A549 (cell line): ENCODE measurements at regions of chr4 and their contacts with region 1.

Region 1: DNA sequence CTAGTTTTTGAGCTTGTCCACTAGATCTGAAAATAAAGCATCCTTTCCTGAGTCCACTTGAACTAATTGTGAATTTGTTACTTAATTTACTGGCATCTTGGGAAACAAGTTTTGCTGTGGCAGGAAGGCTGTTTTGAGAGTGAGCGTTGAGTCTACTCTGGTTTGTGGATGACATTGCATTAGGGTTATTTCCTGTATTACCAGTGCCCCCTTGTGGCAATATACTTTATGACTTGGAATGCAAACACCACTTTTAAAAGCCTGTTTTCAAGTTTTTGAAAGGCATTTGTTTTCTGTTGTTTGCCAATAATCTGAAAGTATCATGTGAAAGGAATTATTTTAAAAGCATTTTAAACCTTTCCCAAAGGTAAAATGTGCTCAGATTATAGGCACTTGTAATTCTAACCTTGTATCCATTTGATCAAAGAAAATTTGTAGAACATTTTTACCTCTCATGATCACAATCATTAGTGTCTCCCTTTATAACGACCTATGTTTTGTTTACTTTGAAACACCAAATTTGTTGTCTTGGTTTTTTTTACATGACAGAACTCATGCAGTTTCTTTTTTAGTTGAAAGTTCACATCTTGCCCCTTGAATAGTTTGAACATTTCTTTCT is 18.0 kb upstream of the CYP2U1 start:
- DNase-seq: peak; percentile 12 to 62
- ATAC-seq: peak; percentile 68 to 80; a peak in 2 of 6 replicates
- H3K4me3 ChIP-seq: no peak overlapping the region
- H3K27ac ChIP-seq: no peak overlapping the region
- H3K4me1 ChIP-seq: no peaks in the 10 kb centered on the region
- CTCF ChIP-seq: peak; percentile 76
- EP300 ChIP-seq: no peak
- POLR2A ChIP-seq: no peak
- RAD21 ChIP-seq: peak; percentile 90 to 91

Region 2: DNA sequence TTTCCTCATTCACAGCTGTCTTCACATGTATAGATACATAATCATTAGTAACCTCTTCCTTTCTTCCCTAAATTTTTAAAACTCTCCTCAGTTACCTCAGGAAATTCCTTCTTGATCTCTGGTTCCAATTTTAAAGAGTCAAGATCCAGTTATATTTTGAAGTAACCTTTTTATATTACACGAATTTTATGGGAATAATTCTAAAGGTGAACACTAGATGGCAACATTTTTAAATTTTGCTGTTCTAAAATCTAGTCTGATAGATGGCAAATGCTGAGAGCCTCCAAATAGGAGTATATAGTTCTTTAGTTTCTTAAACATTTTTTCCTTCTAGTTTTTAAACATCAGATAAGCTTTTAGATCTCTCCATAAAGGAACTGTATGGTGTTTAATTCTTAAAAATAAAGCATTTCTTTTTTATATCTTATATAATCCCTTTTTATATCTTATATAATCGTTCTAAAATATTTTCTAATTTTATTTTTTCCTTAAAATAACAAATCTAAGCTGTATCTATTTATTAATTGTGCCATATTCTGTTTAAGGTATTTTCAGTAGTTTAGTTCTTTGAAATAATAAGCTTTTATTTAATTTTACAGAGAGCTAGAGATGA is 155.4 kb before region 1 on chr4:
- CTCF ChIA-PET with region 1: interaction called, 36 read pairs
- POLR2A ChIA-PET with region 1: no interaction called
- DNase-seq: peak; percentile 11 to 17
- ATAC-seq: no peak
- H3K4me3 ChIP-seq: no peak overlapping the region
- H3K27ac ChIP-seq: no peak overlapping the region
- H3K4me1 ChIP-seq: no peaks in the 10 kb centered on the region
- CTCF ChIP-seq: peak; percentile 52
- EP300 ChIP-seq: no peak
- POLR2A ChIP-seq: no peak
- RAD21 ChIP-seq: peak; percentile 43 to 60

Region 3: DNA sequence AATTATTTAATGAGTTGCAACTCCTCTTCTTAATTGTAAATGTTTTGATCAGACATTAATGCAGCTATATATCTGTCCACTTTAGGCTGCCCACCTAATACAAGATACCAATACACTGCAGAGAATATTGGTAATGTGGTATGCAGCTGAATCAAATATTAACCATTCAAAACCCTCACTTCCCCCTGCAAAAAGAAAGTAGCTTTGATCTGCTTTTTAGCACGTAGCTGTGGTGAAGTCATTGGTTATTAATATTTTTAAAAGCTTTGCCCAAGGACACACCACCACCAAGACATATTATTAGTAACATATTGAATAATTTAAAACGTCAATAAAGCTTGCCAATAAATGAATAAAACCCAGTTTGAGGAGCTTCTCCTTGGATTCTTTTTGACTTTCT is 10.7 kb before region 1 on chr4:
- CTCF ChIA-PET with region 1: interaction called, 13 read pairs
- POLR2A ChIA-PET with region 1: no interaction called
- DNase-seq: no peak
- ATAC-seq: no peak
- H3K4me3 ChIP-seq: no peak overlapping the region
- H3K27ac ChIP-seq: no peak overlapping the region
- H3K4me1 ChIP-seq: no peaks in the 10 kb centered on the region
- CTCF ChIP-seq: no peak
- EP300 ChIP-seq: no peak
- POLR2A ChIP-seq: no peak
- RAD21 ChIP-seq: no peak

Region 4: GRCh38 chr4:108045694-108046038 is 132.3 kb after region 1 on chr4:
- CTCF ChIA-PET with region 1: no interaction called
- POLR2A ChIA-PET with region 1: no interaction called
- DNase-seq: no peak
- ATAC-seq: no peak
- H3K4me3 ChIP-seq: no peak overlapping the region
- H3K27ac ChIP-seq: no peak overlapping the region
- H3K4me1 ChIP-seq: no peaks in the 10 kb centered on the region
- CTCF ChIP-seq: no peak
- EP300 ChIP-seq: no peak
- POLR2A ChIP-seq: no peak
- RAD21 ChIP-seq: no peak

Region 5: DNA sequence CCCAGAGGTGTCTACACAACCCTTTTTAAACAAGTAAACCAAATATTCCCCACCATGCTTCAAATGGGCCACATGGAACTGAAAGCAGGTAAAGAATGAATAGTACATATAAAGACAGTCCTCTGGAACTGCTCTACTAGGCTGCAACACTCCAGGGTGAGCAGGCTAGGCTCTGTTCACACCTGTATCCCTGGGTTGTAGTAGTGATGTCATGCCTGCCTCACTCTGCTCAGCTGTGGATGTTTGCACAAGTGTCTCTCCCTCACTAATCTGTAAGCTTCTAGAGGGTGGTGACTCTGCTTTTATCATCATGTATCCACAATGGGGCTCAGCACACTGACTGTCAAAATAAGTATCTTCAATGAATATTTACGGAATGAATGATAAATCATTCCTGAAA is 234.9 kb after region 1 on chr4:
- CTCF ChIA-PET with region 1: no interaction called
- POLR2A ChIA-PET with region 1: no interaction called
- DNase-seq: no peak
- ATAC-seq: no peak
- H3K4me3 ChIP-seq: no peak overlapping the region
- H3K27ac ChIP-seq: no peak overlapping the region
- H3K4me1 ChIP-seq: no peaks in the 10 kb centered on the region
- CTCF ChIP-seq: no peak
- EP300 ChIP-seq: no peak
- POLR2A ChIP-seq: no peak
- RAD21 ChIP-seq: no peak